Common myeloid progenitor, CD34-positive (primary cell): ENCODE measurements at regions of chr18 and their contacts with region 1.

Region 1: GRCh38 chr18:62714671-62715435 is 488 bp upstream of the PHLPP1 start:
- DNase-seq: peak; percentile 100
- H3K4me3 ChIP-seq: peak overlapping the region; percentile 58 to 95 (median 85)
- H3K27ac ChIP-seq: peak overlapping the region; percentile 70 to 72
- H3K4me1 ChIP-seq: peaks cover 13 to 36% (median 25%) of the 10 kb centered on the region in 4 experiments
- H3K27me3 ChIP-seq: no peaks in the 10 kb centered on the region

Region 2: GRCh38 chr18:62728254-62728653 is 13.4 kb after region 1 on chr18:
- CTCF ChIA-PET with region 1: interaction called, 14 read pairs
- POLR2A ChIA-PET with region 1: no interaction called
- DNase-seq: no peak
- H3K4me3 ChIP-seq: no peak overlapping the region
- H3K27ac ChIP-seq: no peak overlapping the region
- H3K4me1 ChIP-seq: peaks cover 4 to 16% (median 8%) of the 10 kb centered on the region in 4 experiments
- H3K27me3 ChIP-seq: no peaks in the 10 kb centered on the region

Region 3: GRCh38 chr18:62857263-62857976 is 142.6 kb after region 1 on chr18:
- CTCF ChIA-PET with region 1: no interaction called
- POLR2A ChIA-PET with region 1: no interaction called
- DNase-seq: no peak
- H3K4me3 ChIP-seq: no peak overlapping the region
- H3K27ac ChIP-seq: no peak overlapping the region
- H3K4me1 ChIP-seq: peaks cover 0 to 28% (median 13%) of the 10 kb centered on the region in 4 experiments
- H3K27me3 ChIP-seq: no peaks in the 10 kb centered on the region

Region 4: DNA sequence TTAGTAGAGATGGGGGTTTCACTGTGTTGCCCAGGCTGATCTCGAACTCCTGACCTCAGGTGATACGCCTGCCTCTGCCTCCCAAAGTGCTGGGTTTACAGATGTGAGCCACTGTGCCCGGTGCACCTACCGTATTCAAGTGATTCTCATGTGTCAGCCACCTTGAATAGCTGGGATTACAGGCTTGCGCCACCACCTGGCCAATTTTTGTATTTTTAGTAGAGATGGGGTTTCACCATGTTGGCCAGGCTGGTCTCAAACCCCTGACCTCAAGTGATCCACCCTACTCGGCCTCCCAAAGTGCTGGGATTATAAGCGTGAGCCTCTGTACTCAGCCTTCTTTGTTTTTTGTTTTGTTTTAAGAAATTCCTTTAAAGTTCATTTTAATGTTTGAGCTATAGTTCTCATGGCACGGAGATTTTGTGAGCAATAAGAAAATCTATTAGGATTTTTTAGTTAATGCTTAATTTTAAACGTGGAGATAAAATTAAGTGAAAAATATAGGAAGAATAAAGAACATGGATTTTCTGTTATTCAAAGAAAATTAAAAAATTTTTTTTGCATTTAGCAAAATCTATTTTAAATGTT is 243.1 kb after region 1 on chr18:
- CTCF ChIA-PET with region 1: interaction called, 15 read pairs
- POLR2A ChIA-PET with region 1: no interaction called
- DNase-seq: peak; percentile 46 to 70 (median 67)
- H3K4me3 ChIP-seq: no peak overlapping the region
- H3K27ac ChIP-seq: no peak overlapping the region
- H3K4me1 ChIP-seq: peaks cover 13 to 23% (median 19%) of the 10 kb centered on the region in 4 experiments
- H3K27me3 ChIP-seq: no peaks in the 10 kb centered on the region